ENCODE measurements at regions of chr17 and their contacts with region 1.

Region 1: DNA sequence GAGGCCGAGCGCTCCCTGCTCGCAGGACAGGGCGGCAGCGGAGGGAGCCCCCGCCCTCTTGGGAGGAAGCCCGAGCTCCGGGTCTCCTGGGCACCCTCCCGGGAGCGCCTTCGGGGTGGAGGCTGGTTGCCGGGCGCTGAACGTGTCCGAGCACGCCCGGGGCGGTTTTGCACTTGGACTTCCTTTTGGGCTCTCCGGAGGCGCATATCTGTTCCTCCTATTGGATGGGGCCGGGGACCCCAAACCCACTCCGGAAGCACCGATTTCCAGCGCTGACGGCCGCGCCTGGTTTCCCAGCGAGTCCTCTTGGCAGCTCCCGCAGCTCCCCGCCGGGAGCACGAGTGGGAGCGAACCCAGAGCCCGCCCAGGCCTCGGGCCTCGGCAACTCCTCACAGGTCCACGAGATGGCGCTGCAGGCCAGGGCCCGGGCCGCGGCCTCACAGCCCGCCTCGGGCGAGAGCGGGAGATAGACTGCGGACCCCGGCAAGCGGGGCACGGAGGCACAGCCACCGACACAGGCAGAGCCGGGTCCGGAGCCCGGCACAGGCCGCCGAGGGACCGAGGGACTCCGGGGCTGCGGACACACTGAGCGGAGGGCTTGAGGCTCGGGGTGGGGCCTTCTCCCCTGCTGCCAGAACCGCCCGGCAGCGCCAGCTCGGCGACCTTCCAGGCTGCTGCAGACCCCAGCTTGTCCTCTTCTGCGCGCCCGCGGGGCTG is 12.7 kb downstream of the TBX2 start:
- DNase-seq: peak; percentile 49
- ATAC-seq: peak; percentile 62
- H3K4me3 ChIP-seq: peak overlapping the region; percentile 54 to 64
- H3K27ac ChIP-seq: peak overlapping the region; percentile 97
- H3K4me1 ChIP-seq: peaks cover 58 to 70% of the 10 kb centered on the region in 2 experiments
- H3K27me3 ChIP-seq: no peaks in the 10 kb centered on the region
- CTCF ChIP-seq: peak; percentile 94 to 100 (median 99)
- POLR2A ChIP-seq: no peak
- RAD21 ChIP-seq: peak; percentile 100

Region 2: GRCh38 chr17:60720763-60721531 is 691.4 kb before region 1 on chr17:
- CTCF ChIA-PET with region 1: interaction called, 14 read pairs
- POLR2A ChIA-PET with region 1: interaction called, 3 read pairs
- RAD21 ChIA-PET with region 1: interaction called, 4 read pairs
- intact Hi-C with region 1: loop called (anchors 1 kb)
- DNase-seq: peak; percentile 60
- ATAC-seq: peak; percentile 90
- H3K4me3 ChIP-seq: no peak overlapping the region
- H3K27ac ChIP-seq: no peak overlapping the region
- H3K4me1 ChIP-seq: no peaks in the 10 kb centered on the region
- H3K27me3 ChIP-seq: no peaks in the 10 kb centered on the region
- CTCF ChIP-seq: peak; percentile 86 to 99 (median 96)
- POLR2A ChIP-seq: no peak
- RAD21 ChIP-seq: peak; percentile 92

Region 3: GRCh38 chr17:61002316-61002736 is 410.0 kb before region 1 on chr17:
- CTCF ChIA-PET with region 1: interaction called, 7 read pairs
- POLR2A ChIA-PET with region 1: no interaction called
- RAD21 ChIA-PET with region 1: interaction called in 1 of 2 experiments, 4 read pairs
- intact Hi-C with region 1: loop called (anchors 1 kb)
- DNase-seq: peak; percentile 26
- ATAC-seq: peak; percentile 69
- H3K4me3 ChIP-seq: no peak overlapping the region
- H3K27ac ChIP-seq: no peak overlapping the region
- H3K4me1 ChIP-seq: no peaks in the 10 kb centered on the region
- H3K27me3 ChIP-seq: no peaks in the 10 kb centered on the region
- CTCF ChIP-seq: peak; percentile 49 to 88 (median 77); a peak in 5 of 6 replicates
- POLR2A ChIP-seq: no peak
- RAD21 ChIP-seq: peak; percentile 88

Region 4: DNA sequence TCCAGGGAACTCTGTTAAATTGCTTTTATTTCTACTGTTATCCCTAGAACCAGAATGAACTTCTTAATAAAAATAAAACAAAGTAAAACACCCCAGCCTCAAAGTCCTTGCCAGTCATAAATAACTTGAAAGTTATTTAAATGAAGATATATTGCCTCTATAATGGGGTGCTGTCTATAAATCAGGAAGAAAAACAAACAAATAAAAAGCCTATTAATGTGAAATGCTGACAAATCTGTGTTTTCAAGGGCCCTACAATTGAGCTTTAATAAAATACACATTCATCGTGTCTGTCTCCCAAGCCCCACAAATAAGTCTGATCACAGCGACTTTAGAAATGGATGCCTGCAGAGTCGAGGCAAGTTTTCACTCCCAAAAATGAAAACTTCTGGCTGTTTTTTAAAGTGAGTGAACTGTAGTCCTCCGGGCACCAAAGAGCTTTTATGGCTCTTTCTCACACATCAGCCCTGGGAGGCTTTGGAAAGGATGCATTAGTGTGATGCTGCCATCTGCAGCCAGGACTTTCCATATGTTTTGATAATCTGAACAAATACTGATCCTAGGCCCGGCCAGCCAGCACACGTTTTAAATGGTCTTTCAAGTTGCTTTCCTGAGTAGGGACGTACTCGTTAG is 162.4 kb after region 1 on chr17:
- CTCF ChIA-PET with region 1: interaction called, 60 read pairs
- POLR2A ChIA-PET with region 1: no interaction called
- RAD21 ChIA-PET with region 1: interaction called, 6 to 11 read pairs
- intact Hi-C with region 1: loop called (anchors 1 kb)
- DNase-seq: peak; percentile 74
- ATAC-seq: peak; percentile 92
- H3K4me3 ChIP-seq: peak overlapping the region in 1 of 2 experiments; percentile 6; a peak in 2 of 4 replicates
- H3K27ac ChIP-seq: peak overlapping the region; percentile 66
- H3K4me1 ChIP-seq: peaks cover 28 to 41% of the 10 kb centered on the region in 2 experiments
- H3K27me3 ChIP-seq: no peaks in the 10 kb centered on the region
- CTCF ChIP-seq: peak; percentile 57 to 89 (median 67)
- POLR2A ChIP-seq: no peak
- RAD21 ChIP-seq: peak; percentile 96

Region 5: DNA sequence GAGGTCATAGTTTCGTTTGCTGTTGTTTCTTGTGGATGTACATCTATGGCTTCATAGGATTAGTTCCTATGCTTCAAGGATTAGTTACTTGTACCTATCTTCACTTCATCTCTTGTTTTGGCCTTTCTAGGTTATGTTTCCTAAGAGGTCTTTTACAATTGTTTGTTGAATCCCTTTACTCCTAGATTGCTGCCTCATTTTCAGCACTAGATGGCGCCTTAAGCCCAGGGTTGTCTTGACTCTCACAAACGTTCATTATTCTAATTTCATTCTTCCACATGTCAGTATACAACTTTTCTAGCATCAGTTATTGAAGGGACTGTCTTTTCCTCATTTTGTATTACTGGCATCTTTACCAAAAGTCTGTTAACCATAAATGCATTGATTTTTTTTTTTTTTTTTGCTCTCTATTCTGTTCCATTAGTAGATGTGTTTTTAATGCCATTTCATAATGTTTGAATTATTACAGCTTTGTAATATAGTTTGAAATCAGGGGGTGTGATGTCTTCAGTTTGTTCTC is 223.7 kb after region 1 on chr17:
- CTCF ChIA-PET with region 1: no interaction called
- POLR2A ChIA-PET with region 1: no interaction called
- RAD21 ChIA-PET with region 1: no interaction called
- intact Hi-C with region 1: loop called (anchors 2 kb)
- DNase-seq: peak; percentile 65
- ATAC-seq: peak; percentile 80
- H3K4me3 ChIP-seq: no peak overlapping the region
- H3K27ac ChIP-seq: no peak overlapping the region
- H3K4me1 ChIP-seq: no peaks in the 10 kb centered on the region
- H3K27me3 ChIP-seq: no peaks in the 10 kb centered on the region
- CTCF ChIP-seq: peak; percentile 88 to 99 (median 89)
- POLR2A ChIP-seq: no peak
- RAD21 ChIP-seq: peak; percentile 96

Measured in HCT116 (cell line).